ENCODE measurements at regions of chr16 and their contacts with region 1.

Region 1: DNA sequence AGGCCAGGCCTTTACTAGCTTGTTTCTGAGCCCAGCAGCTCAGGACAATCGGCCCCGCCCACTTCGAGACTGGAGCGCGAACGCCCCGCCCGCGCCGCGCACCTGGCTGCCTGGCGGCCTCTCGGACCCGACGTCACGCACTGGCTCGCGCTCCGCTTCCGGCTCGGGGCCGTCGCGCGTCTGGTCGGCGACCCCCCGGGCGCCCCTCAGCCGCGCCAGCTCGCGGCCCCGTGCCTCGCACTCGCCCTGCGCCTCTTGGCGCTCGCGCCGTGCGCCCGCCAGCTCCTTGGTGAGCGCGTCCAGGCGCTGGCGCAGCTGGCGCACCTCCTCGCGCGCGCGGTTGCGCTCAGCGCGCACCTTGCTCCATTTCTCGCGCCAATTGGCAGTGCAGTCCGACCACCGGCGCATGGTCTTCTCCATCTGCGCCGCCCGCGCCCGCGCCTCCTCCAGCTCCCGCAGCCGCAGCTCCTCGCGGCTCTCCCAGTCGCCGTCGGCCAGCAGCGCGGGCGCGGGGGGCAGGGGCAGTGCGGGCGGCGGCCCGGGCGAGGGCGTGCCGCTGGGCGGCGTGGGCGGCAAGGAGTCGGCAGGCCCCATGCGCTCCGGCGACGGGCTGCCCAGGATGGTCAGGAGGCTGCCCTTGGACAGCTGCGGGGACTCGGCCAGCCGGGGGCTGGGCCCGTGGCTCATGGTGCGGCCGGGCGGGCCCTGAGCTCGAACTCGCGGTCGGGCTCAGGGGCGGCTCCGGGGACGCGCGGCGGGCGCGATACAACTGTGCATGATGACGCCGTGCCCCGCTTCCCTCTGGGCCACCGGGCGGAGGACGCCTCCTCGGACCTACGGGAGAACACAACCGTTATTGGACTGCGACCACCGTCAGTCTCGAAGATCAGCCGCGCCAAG is 7.6 kb downstream of the CCDC102A start:
- DNase-seq: no peak
- H3K4me3 ChIP-seq: peak overlapping the region in 1 of 7 experiments; percentile 11
- H3K27ac ChIP-seq: peak overlapping the region in 1 of 2 experiments; percentile 61
- H3K4me1 ChIP-seq: peaks cover 3 to 58% (median 56%) of the 10 kb centered on the region in 4 experiments
- H3K27me3 ChIP-seq: no peaks in the 10 kb centered on the region

Region 2: DNA sequence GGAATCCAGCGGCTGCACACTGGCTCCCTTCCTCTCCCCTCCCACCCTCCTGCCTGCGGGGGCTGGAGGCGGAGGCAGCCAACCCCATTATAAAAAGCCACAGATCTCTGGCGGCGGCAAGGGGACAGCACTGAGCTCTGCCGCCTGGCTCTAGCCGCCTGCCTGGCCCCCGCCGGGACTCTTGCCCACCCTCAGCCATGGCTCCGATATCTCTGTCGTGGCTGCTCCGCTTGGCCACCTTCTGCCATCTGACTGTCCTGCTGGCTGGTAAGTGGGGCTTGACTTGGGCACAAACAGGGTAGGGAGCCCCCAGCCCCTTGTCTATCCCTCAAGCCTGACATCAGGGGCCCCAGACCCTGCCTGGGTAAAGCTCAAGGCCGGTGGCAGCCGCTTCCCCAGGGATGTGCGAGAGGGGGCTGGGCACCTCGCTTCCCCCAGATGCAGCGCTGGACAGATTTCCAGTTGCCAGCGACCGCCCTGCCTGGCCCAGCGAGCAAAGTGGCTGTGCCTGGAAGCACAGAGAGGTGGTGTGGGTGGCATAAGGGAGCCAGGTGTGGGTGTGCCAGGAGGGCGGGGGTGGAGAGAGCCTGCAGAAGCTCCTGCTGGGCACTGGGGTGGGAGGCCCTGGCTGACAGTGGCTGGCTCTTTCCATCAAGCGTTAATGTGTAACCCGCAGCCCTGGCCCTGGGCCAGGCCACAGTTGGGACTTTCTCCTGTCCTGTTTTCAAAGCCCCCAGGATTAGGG is 156.2 kb before region 1 on chr16 and contains the start of gene CX3CL1:
- CTCF ChIA-PET with region 1: no interaction called
- POLR2A ChIA-PET with region 1: no interaction called
- DNase-seq: no peak
- H3K4me3 ChIP-seq: no peak within 1 kb of the TSS
- H3K27ac ChIP-seq: no peak within 1 kb of the TSS
- H3K4me1 ChIP-seq: no peaks in the 10 kb centered on the region
- H3K27me3 ChIP-seq: peaks cover 0 to 6% (median 2%) of the 10 kb centered on the region in 5 experiments

Region 3: DNA sequence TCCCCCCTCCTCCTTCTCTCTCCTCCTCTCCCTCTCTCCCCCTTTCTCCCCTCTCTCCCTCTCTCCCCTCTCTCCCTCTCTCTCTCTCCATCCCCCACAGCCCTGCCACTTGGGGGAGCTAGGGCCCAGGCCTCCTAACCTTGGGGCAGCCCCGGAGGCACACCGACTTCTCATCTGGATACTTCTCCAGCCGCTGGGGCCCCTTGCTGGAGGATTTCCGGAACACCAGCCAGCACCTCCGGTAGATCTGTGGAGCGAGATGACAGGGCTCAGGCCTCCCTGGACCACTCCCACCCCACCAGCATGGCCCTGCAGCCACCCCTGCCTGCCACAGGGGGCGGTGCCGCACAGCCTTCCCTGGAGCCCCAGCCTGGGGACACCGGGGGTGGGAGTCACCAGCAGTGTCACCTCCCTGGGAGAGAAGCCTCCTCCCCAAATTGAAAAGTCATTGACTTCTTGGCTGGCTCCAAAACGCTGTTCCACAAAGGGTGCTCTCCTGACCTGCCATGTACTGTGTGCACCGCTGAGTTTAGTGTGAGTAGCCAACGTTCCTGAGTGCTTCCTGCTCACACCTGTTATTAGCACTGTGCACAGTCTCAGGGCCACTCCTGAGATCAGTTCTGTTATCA is 52.9 kb before region 1 on chr16:
- CTCF ChIA-PET with region 1: interaction called, 134 read pairs
- POLR2A ChIA-PET with region 1: interaction called, 4 read pairs
- DNase-seq: peak; percentile 96 to 99 (median 98)
- H3K4me3 ChIP-seq: peak overlapping the region in 2 of 7 experiments; percentile 20 to 49
- H3K27ac ChIP-seq: no peak overlapping the region
- H3K4me1 ChIP-seq: peaks cover 0 to 77% (median 75%) of the 10 kb centered on the region in 4 experiments
- H3K27me3 ChIP-seq: no peaks in the 10 kb centered on the region

Region 4: GRCh38 chr16:57513371-57514102 is 15.2 kb before region 1 on chr16:
- CTCF ChIA-PET with region 1: interaction called, 21 read pairs
- POLR2A ChIA-PET with region 1: interaction called, 3 read pairs
- DNase-seq: no peak
- H3K4me3 ChIP-seq: no peak overlapping the region
- H3K27ac ChIP-seq: no peak overlapping the region
- H3K4me1 ChIP-seq: no peaks in the 10 kb centered on the region
- H3K27me3 ChIP-seq: no peaks in the 10 kb centered on the region

Region 5: GRCh38 chr16:57544119-57544653 is 15.4 kb after region 1 on chr16:
- CTCF ChIA-PET with region 1: interaction called, 17 read pairs
- POLR2A ChIA-PET with region 1: interaction called, 5 read pairs
- DNase-seq: peak; percentile 96 to 98 (median 98)
- H3K4me3 ChIP-seq: peak overlapping the region in 3 of 7 experiments; percentile 14 to 78 (median 61)
- H3K27ac ChIP-seq: peak overlapping the region; percentile 29 to 58
- H3K4me1 ChIP-seq: peaks cover 20 to 74% (median 61%) of the 10 kb centered on the region in 4 experiments
- H3K27me3 ChIP-seq: no peaks in the 10 kb centered on the region